ENCODE measurements at regions of chr2 and their contacts with region 1.

Region 1: DNA sequence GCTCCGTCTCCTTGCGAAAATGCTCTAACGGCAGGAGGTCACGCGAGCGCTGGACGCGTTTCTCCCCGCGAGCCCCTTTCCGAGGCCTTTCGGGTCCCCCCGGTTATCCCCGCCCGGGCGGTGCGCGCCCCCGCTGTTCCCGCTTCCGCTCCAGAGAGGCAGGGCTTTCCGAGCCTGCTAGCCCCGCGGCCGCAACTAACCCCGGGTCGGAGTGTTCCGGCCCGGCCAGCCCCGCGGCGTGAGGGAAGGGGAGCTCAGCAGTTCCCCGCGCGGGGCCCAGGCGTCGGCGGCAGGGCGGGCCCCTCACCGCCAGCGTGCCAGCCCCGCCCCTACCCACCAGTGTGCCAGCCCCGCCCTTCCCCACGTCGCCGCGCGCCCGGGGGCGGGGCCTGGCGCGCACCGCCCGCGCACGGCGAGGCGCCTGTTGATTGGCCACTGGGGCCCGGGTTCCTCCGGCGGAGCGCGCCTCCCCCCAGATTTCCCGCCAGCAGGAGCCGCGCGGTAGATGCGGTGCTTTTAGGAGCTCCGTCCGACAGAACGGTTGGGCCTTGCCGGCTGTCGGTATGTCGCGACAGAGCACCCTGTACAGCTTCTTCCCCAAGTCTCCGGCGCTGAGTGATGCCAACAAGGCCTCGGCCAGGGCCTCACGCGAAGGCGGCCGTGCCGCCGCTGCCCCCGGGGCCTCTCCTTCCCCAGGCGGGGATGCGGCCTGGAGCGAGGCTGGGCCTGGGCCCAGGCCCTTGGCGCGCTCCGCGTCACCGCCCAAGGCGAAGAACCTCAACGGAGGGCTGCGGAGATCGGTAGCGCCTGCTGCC is at the start of gene MSH6:
- DNase-seq: peak; percentile 87
- H3K4me3 Mint-ChIP-seq: peak within 1 kb of the TSS; percentile 91
- H3K27ac Mint-ChIP-seq: peak within 1 kb of the TSS; percentile 84
- H3K4me1 Mint-ChIP-seq: peaks cover 32% of the 10 kb centered on the region
- H3K27me3 Mint-ChIP-seq: no peaks in the 10 kb centered on the region
- total RNA-seq, gene MSH6: 127 to 128 TPM

Region 2: GRCh38 chr2:47751875-47752357 is 31.0 kb before region 1 on chr2:
- CTCF ChIA-PET with region 1: no interaction called
- intact Hi-C with region 1: loop called (anchors 1 kb)
- DNase-seq: no peak
- H3K4me3 Mint-ChIP-seq: no peak overlapping the region
- H3K27ac Mint-ChIP-seq: peak overlapping the region; percentile 69
- H3K4me1 Mint-ChIP-seq: peaks cover 9% of the 10 kb centered on the region
- H3K27me3 Mint-ChIP-seq: no peaks in the 10 kb centered on the region

Region 3: GRCh38 chr2:47819834-47820233 is 37.0 kb after region 1 on chr2:
- CTCF ChIA-PET with region 1: no interaction called
- intact Hi-C with region 1: loop called (anchors 5 kb)
- DNase-seq: no peak
- H3K4me3 Mint-ChIP-seq: no peak overlapping the region
- H3K27ac Mint-ChIP-seq: no peak overlapping the region
- H3K4me1 Mint-ChIP-seq: peaks cover 4% of the 10 kb centered on the region
- H3K27me3 Mint-ChIP-seq: no peaks in the 10 kb centered on the region

Region 4: GRCh38 chr2:48034295-48034694 is 251.4 kb after region 1 on chr2:
- CTCF ChIA-PET with region 1: no interaction called
- intact Hi-C with region 1: no loop called
- DNase-seq: no peak
- H3K4me3 Mint-ChIP-seq: no peak overlapping the region
- H3K27ac Mint-ChIP-seq: no peak overlapping the region
- H3K4me1 Mint-ChIP-seq: peaks cover 16% of the 10 kb centered on the region
- H3K27me3 Mint-ChIP-seq: no peaks in the 10 kb centered on the region

Region 5: GRCh38 chr2:48343571-48344440 is 560.9 kb after region 1 on chr2:
- CTCF ChIA-PET with region 1: no interaction called
- intact Hi-C with region 1: loop called (anchors 10 kb)
- DNase-seq: no peak
- H3K4me3 Mint-ChIP-seq: peak overlapping the region; percentile 8
- H3K27ac Mint-ChIP-seq: peak overlapping the region; percentile 47
- H3K4me1 Mint-ChIP-seq: peaks cover 37% of the 10 kb centered on the region
- H3K27me3 Mint-ChIP-seq: no peaks in the 10 kb centered on the region

Measured in activated naive CD4-positive, alpha-beta T cell treated with anti-CD3 and anti-CD28 coated beads for 36 hours (primary cell).